ENCODE measurements at regions of chr1 and their contacts with region 1.

Region 1: DNA sequence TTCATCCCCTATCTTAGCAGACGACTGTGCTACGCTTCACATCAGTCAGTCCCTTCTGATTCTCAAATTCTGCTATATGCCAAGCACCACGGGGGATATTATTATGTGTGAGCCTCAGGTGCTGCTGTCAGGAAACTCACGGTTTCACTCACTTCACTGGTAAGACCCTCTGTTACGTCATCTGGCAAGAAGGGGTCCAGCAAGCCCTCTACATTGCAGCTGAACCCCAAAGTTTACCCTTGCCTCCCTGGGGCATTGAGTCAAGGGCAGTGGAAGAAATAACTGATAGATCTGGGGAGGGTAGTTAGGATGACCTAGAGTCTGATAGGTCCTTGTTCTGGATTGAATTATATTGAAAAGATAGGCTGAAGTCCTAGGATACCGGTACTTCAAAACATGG is 237.4 kb downstream of the RRAGC start:
- DNase-seq: no peak
- ATAC-seq: no peak
- H3K4me3 ChIP-seq: no peak overlapping the region
- H3K27ac ChIP-seq: no peak overlapping the region
- H3K4me1 ChIP-seq: no peaks in the 10 kb centered on the region
- H3K27me3 ChIP-seq: no peaks in the 10 kb centered on the region

Region 2: DNA sequence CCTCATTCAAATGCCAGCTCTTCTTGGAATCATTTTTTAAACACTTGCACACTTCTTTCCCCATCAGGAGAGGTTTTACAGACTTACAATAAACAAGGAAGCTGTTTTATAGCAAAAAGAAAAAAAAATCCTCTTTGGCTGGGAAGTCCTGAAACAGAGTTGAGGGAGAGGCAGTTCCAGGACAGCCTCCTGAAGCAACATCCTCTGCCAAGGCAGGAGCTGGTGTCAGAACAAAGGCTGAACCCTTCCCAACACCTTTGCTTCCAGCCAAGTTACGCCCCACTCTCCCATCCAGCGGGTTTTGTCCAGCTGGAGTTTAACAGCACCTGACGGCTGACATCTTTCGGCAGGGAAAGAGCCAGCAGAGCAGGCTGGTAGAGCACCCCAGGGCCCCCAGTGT is 50.5 kb before region 1 on chr1:
- intact Hi-C with region 1: no loop called
- DNase-seq: no peak
- ATAC-seq: peak; percentile 70 to 85
- H3K4me3 ChIP-seq: no peak overlapping the region
- H3K27ac ChIP-seq: no peak overlapping the region
- H3K4me1 ChIP-seq: no peaks in the 10 kb centered on the region
- H3K27me3 ChIP-seq: no peaks in the 10 kb centered on the region

Region 3: DNA sequence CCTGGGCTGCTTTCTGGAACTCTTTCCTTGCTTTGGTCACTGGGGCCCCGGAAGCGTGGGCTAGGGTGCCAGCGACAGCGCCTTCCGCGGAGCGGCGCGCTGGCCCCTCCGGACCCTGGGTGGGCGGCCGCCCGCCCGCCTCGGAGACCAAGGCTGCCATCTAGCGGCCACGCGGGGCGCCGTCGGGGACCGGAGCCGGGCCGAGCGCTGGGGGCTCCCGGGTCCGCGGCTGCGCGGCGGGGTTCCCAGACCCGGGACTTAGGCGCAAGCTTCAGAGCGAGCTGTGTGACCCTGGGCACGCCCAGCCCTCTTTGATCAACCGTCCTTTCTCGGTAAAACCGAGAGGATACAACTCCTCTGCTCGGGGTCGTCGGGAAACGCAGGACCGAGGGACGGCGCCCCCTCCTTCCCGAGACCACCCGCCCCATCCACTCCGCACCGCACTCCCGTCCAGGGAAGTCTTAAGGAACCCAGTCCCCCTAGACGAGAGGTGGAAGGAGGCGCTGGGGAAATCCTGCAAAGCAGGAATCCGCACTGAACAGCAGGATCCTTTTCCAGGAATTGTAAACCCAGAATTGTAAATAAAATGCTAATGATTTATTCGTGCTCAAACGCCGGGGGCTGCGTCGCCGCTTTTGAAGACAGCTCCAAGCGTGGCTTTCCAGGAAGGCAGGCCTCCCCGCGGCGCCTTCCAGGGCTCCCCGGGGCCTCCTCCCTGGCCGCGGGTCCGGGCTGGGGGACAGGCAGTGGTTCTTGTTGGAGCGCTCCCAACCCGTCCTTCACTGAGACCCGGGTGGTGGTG is 196.2 kb after region 1 on chr1:
- intact Hi-C with region 1: loop called in 2 of 4 experiments (anchors 1 to 10 kb)
- DNase-seq: peak; percentile 25 to 79 (median 76)
- ATAC-seq: peak; percentile 64 to 82
- H3K4me3 ChIP-seq: peak overlapping the region; percentile 32
- H3K27ac ChIP-seq: no peak overlapping the region
- H3K4me1 ChIP-seq: no peaks in the 10 kb centered on the region
- H3K27me3 ChIP-seq: no peaks in the 10 kb centered on the region